Naive thymus-derived CD8-positive, alpha-beta T cell (primary cell): ENCODE measurements at regions of chr3 and their contacts with region 1.

Region 1: DNA sequence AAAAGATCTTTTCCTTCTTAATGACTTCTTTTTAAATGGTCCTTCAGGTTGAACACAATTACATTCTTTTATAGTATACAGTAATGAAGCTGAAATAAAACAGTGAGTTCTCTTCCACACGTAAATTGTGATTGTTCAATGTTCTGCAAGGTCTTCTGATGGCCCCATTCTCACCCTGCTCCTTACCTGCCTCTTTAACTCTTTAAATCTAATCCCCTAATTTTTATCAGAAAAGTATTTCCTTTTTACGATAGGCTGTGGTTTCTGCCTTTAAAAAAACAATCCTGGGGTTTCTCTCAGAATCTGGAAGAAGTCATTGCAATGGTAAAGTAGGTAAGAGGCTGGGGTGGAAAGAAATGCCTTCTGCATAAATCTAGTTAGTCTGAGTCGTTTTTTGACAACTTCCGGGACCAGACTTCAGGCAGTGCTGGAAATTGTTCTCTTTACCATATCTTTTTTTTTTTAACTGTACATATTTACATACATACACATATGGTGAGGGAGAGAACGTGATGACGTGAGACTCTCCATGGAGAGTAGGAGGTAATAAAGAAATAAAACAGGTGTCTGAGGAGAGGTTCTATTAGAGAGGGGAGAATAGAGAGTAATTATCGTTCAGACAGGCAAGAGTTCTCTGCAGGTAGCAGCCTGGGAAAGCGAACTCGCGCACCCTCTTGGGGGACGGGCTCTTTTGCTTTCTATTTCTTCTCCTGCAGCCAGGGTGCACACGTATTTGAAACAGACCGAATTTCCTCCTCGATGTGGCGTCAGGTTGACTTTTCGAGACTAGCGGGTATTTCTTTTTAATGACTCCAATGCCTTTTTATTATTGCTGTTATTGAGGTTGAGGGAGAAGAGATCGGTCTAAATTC is at the start of gene SIDT1:
- DNase-seq: peak; percentile 45 to 86 (median 73)
- ATAC-seq: peak; percentile 80 to 81
- H3K4me3 Mint-ChIP-seq: peak within 1 kb of the TSS; percentile 94 to 100 (median 98)
- H3K27ac Mint-ChIP-seq: peak within 1 kb of the TSS; percentile 98 to 100 (median 99)
- H3K4me1 Mint-ChIP-seq: peaks cover 29 to 49% (median 48%) of the 10 kb centered on the region in 4 donors
- H3K27me3 Mint-ChIP-seq: peaks cover 0 to 2% (median 0%) of the 10 kb centered on the region in 5 donors
- polyA plus RNA-seq, gene SIDT1: 14.1 to 22.8 (median 20.6) TPM

Region 2: GRCh38 chr3:113291572-113291971 is 240.5 kb before region 1 on chr3:
- POLR2A ChIA-PET with region 1: no interaction called
- DNase-seq: no peak
- ATAC-seq: no peak
- H3K4me3 Mint-ChIP-seq: no peak overlapping the region
- H3K27ac Mint-ChIP-seq: no peak overlapping the region
- H3K4me1 Mint-ChIP-seq: no peaks in the 10 kb centered on the region
- H3K27me3 Mint-ChIP-seq: no peaks in the 10 kb centered on the region

Region 3: DNA sequence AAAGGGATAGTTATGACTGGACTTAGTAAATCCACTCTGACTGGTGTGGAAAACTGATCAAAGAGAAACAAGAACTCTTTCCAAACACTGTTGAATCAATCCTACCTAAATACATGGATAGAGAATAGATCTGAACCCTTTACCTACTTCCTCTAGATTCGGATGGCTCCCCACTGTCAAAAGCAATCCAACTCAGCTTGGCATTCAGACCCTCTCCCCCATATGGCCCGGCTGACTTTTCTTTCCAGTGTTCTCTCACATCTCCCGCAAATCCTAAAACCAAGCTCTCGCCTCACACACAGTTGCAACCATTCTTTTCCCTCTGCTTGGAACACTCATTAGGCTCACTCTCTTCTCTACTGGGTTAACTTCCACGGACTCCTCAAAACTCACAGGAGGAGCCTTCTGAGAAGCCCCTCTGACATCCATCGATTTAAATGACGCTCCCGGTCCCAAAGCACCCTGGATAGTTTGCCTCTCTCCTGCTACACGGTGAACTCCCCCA is 17.7 kb before region 1 on chr3:
- POLR2A ChIA-PET with region 1: interaction called, 73 read pairs
- DNase-seq: peak in 1 of 10 donors; percentile 5
- ATAC-seq: no peak
- H3K4me3 Mint-ChIP-seq: no peak overlapping the region
- H3K27ac Mint-ChIP-seq: no peak overlapping the region
- H3K4me1 Mint-ChIP-seq: peaks cover 14 to 25% (median 18%) of the 10 kb centered on the region in 4 donors
- H3K27me3 Mint-ChIP-seq: peaks cover 0 to 16% (median 4%) of the 10 kb centered on the region in 5 donors

Region 4: DNA sequence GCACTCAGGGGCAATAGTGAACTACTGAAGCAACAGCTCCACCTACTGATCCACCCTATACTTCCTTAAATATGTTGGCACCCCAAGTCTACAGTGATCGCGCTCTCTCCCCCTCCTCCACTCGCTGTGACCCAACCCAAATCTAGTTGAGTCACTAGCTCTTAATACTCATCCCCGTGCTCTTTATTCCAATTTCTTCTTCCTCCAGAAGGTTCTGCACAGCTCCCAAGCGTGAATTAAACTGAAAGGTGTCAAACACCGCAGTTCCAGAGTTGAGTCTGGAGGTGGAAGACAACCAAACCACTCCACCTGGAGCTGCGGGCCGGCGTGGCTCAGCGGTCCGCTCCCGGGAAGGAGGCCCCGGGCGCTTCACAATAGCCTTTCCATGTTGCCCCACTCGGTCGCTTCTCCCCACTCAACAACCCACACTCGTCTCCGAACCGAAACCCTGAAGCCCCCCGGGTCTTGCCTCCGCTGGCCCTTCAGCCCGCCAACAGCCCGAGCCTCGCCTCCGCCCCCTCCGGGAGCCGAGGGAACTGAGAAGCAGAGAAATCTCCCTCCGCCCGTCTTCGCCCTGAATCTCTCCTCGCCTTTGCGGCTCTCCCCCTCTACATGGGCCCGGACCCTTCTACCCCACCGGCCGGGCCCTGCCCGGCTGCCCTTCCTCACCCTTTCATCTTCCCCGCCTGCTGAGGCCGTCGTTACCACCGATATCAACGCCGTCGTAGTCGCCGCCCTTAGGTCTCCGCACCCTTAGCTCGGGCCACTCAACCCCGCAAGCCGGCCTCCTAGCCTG is 213.4 kb after region 1 on chr3:
- POLR2A ChIA-PET with region 1: interaction called, 13 read pairs
- DNase-seq: peak; percentile 45 to 88 (median 76)
- ATAC-seq: peak; percentile 72 to 73
- H3K4me3 Mint-ChIP-seq: peak overlapping the region; percentile 93 to 100 (median 98)
- H3K27ac Mint-ChIP-seq: peak overlapping the region; percentile 95 to 100 (median 100)
- H3K4me1 Mint-ChIP-seq: peaks cover 36 to 80% (median 72%) of the 10 kb centered on the region in 4 donors
- H3K27me3 Mint-ChIP-seq: no peaks in the 10 kb centered on the region